SK-N-SH (cell line): ENCODE measurements at regions of chr14 and their contacts with region 1.

Region 1: GRCh38 chr14:95098984-95099599 is 58.2 kb downstream of the DICER1 start:
- DNase-seq: peak; percentile 45
- H3K4me3 ChIP-seq: peak overlapping the region in 1 of 2 experiments; percentile 21; a peak in 1 of 4 replicates
- H3K27ac ChIP-seq: no peak overlapping the region
- H3K4me1 ChIP-seq: peaks cover 13 to 14% of the 10 kb centered on the region in 2 experiments; a peak in 3 of 4 replicates
- H3K27me3 ChIP-seq: no peaks in the 10 kb centered on the region
- CTCF ChIP-seq: peak; percentile 72
- EP300 ChIP-seq: no peak
- RAD21 ChIP-seq: peak; percentile 73

Region 2: DNA sequence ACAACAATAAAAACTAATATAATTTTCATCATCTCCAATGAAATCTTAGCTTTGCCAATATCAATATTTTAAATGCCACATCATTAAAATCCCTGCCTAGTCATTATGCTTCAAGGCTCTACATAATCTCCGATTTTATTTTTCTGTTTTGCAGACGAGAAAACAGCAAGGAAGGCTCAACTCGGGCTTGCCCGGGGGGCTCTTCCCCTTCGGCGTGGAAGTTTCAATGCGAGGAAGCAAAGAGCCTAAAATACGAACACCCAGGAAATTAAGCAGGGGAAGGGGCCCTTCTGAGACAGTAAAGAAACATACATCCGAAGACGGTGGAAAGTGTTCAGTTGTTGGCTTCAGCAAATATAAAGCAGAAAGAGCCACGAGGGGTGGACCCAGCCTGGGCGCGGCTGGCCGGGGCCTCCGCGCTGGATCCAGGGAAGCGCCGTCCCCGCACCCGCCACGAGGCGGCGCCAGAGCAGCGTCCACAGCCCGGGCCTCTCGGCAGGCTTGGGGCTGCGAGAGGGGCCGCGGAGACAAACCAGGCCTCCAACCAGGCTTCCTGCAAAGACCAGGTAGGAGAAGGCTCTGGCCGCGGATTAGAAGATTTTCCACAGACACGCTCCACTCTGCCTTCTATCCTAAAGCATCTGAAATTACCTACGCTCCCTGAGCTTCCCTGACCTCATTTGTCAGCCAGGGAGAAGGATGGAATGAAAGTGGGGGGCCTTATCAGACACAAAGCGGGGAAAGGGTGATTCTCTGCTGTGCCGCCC is 409.7 kb before region 1 on chr14:
- CTCF ChIA-PET with region 1: interaction called, 11 read pairs
- POLR2A ChIA-PET with region 1: no interaction called
- DNase-seq: peak; percentile 93
- H3K4me3 ChIP-seq: peak overlapping the region in 1 of 2 experiments; percentile 39; a peak in 2 of 4 replicates
- H3K27ac ChIP-seq: no peak overlapping the region
- H3K4me1 ChIP-seq: peaks cover 0 to 6% of the 10 kb centered on the region in 2 experiments; a peak in 1 of 4 replicates
- H3K27me3 ChIP-seq: no peaks in the 10 kb centered on the region
- CTCF ChIP-seq: peak; percentile 95
- EP300 ChIP-seq: no peak
- RAD21 ChIP-seq: peak; percentile 93

Region 3: DNA sequence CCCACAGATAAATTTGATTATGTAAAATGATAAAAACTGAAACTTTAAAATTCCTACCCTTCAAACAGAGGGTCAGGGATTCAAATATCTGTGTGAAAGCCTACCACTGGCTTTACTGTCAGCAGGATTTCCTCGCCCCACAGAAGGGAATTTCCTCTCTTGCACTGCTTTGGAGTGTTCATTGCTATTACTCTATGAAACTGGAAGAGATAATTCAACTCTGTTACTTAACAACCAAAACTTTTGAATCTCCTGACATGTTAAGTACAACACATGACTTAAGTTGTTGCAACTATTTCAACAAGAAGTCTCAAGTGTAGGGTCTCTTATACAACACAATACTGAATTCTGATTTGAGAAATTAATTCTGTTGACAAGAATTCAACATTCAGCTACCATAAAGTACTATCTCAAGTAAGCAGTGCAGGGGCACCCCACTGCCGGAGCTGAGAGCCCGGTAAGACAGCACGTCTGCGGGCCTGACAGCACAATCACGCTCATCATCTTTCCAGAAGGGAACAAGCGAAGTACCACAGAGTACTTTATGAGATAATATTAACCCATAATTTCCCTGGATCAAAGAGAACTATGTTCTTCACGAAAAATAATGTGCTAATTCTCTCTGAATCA is 35.3 kb after region 1 on chr14:
- CTCF ChIA-PET with region 1: no interaction called
- POLR2A ChIA-PET with region 1: no interaction called
- DNase-seq: no peak
- H3K4me3 ChIP-seq: no peak overlapping the region
- H3K27ac ChIP-seq: no peak overlapping the region
- H3K4me1 ChIP-seq: peaks cover 3 to 5% of the 10 kb centered on the region in 2 experiments; a peak in 2 of 4 replicates
- H3K27me3 ChIP-seq: no peaks in the 10 kb centered on the region
- CTCF ChIP-seq: no peak
- EP300 ChIP-seq: no peak
- RAD21 ChIP-seq: no peak